ENCODE measurements at regions of chr16 and their contacts with region 1.

Region 1: GRCh38 chr16:80466024-80466987 is 74.5 kb upstream of the DYNLRB2 start:
- DNase-seq: peak; percentile 54
- ATAC-seq: peak; percentile 96
- H3K4me3 ChIP-seq: no peak overlapping the region
- H3K27ac ChIP-seq: no peak overlapping the region
- H3K4me1 ChIP-seq: peaks cover 43% of the 10 kb centered on the region
- H3K27me3 ChIP-seq: peaks cover 0 to 7% of the 10 kb centered on the region in 2 experiments; a peak in 2 of 5 replicates
- CTCF ChIP-seq: peak; percentile 100
- EP300 ChIP-seq: no peak
- POLR2A ChIP-seq: no peak
- RAD21 ChIP-seq: peak; percentile 98

Region 2: GRCh38 chr16:79601931-79602627 is 864.2 kb before region 1 on chr16:
- CTCF ChIA-PET with region 1: no interaction called
- POLR2A ChIA-PET with region 1: no interaction called
- in situ Hi-C with region 1: no loop called
- intact Hi-C with region 1: loop called (anchors 1 kb)
- DNase-seq: peak; percentile 76
- ATAC-seq: peak; percentile 46
- H3K4me3 ChIP-seq: peak overlapping the region; percentile 44 to 67 (median 50); a peak in 5 of 6 replicates
- H3K27ac ChIP-seq: no peak overlapping the region
- H3K4me1 ChIP-seq: peaks cover 28% of the 10 kb centered on the region
- H3K27me3 ChIP-seq: peaks cover 9 to 29% of the 10 kb centered on the region in 2 experiments
- CTCF ChIP-seq: peak; percentile 82
- EP300 ChIP-seq: no peak
- POLR2A ChIP-seq: no peak
- RAD21 ChIP-seq: peak; percentile 53; the same call in 1 of the 2 replicates

Region 3: DNA sequence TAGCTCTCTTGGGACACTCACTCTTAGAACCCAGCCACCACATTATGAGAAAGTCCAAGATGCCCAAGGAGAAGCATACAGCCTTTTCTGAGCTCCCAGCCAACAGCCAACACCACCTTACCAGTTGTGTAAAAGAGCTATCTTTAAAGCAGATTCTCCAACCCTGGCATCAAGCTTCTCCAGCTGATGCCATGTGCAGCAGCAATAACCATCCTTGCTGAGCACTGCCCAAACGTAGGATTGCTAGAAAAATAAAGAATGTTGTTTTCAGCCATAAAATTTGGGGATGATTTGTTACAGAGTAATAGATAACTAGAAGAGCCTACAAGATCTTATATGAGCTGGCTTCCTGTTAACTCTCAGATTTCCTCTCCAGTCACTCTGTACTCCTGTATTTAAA is 369.2 kb before region 1 on chr16:
- CTCF ChIA-PET with region 1: no interaction called
- POLR2A ChIA-PET with region 1: no interaction called
- in situ Hi-C with region 1: no loop called
- intact Hi-C with region 1: loop called (anchors 10 kb)
- DNase-seq: no peak
- ATAC-seq: no peak
- H3K4me3 ChIP-seq: no peak overlapping the region
- H3K27ac ChIP-seq: no peak overlapping the region
- H3K4me1 ChIP-seq: no peaks in the 10 kb centered on the region
- H3K27me3 ChIP-seq: no peaks in the 10 kb centered on the region; a peak in 1 of 5 replicates
- CTCF ChIP-seq: no peak
- EP300 ChIP-seq: no peak
- POLR2A ChIP-seq: no peak
- RAD21 ChIP-seq: no peak

Region 4: DNA sequence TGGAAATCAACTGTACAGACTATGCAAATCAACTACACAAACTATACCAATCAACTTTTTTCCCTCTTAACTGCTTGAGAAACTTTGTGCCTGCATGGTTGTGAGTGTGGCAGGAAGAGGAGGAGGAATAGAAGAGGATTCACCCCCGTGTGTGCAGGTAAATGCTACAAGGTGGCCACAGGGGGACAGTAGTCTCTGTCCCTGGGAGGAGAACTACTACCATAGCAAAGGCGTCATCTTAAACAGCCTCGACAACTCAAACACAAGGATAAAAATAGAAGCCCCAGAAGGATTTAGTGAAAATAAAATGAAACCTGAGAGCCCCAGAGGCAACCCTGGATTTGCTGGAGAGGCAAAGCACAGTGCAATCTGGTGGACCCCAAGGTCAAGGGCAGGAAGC is 125.0 kb before region 1 on chr16:
- CTCF ChIA-PET with region 1: interaction called, 7 read pairs
- POLR2A ChIA-PET with region 1: no interaction called
- in situ Hi-C with region 1: no loop called
- intact Hi-C with region 1: loop called (anchors 1 kb)
- DNase-seq: peak; percentile 12
- ATAC-seq: peak; percentile 96
- H3K4me3 ChIP-seq: no peak overlapping the region
- H3K27ac ChIP-seq: no peak overlapping the region
- H3K4me1 ChIP-seq: peaks cover 7% of the 10 kb centered on the region
- H3K27me3 ChIP-seq: peaks cover 0 to 5% of the 10 kb centered on the region in 2 experiments; a peak in 1 of 5 replicates
- CTCF ChIP-seq: peak; percentile 62
- EP300 ChIP-seq: no peak
- POLR2A ChIP-seq: no peak
- RAD21 ChIP-seq: peak; percentile 53